AG04450 (cell line): ENCODE measurements at regions of chr14 and their contacts with region 1.

Region 1: GRCh38 chr14:74816124-74816523 is 53.0 kb downstream of the YLPM1 start:
- DNase-seq: no peak
- H3K4me3 ChIP-seq: no peak overlapping the region
- H3K27ac ChIP-seq: no peak overlapping the region
- H3K27me3 ChIP-seq: no peaks in the 10 kb centered on the region
- CTCF ChIP-seq: no peak

Region 2: DNA sequence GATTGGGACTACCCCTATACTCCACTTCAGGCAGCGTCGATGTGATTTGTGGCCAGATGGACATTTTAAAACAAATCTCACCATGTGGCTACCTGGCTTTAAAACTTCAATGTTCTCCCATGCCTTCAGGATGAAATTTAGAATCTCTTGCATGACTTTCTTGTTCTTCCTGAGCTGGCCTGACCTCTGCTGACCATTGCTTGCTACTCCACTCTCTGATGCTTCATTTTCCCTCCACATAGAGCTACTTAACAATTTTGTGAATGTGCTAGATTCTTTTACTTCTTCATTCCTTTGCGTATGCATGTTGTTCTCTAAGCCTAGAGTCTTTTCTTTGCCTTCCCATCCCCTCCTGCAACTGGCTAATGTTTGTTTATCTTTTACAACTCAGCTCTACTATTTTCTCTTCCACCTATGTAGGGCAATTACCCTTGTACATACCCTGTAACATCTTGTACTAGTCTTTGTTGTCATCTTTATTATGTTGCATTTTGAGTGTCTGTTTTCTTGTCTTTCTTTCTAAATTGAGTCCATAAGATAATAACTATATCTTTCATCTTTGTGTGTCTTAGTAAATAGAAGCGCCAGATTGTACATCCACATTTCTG is 11.8 kb before region 1 on chr14:
- CTCF ChIA-PET with region 1: interaction called, 13 read pairs
- POLR2A ChIA-PET with region 1: no interaction called
- DNase-seq: peak; percentile 43
- H3K4me3 ChIP-seq: no peak overlapping the region
- H3K27ac ChIP-seq: no peak overlapping the region
- H3K27me3 ChIP-seq: no peaks in the 10 kb centered on the region
- CTCF ChIP-seq: peak; percentile 81